ENCODE measurements at regions of chr6 and their contacts with region 1.

Region 1: GRCh38 chr6:124961777-124962611 is at the start of gene RNF217:
- DNase-seq: peak; percentile 49
- H3K4me3 Mint-ChIP-seq: peak within 1 kb of the TSS; percentile 81
- H3K27ac Mint-ChIP-seq: peak within 1 kb of the TSS; percentile 86
- H3K4me1 Mint-ChIP-seq: peaks cover 37% of the 10 kb centered on the region
- H3K27me3 Mint-ChIP-seq: no peaks in the 10 kb centered on the region
- CTCF ChIP-seq: no peak
- total RNA-seq, gene RNF217: 22.8 and 24.8 TPM in 2 replicates

Region 2: GRCh38 chr6:124881898-124882579 is 80.0 kb before region 1 on chr6:
- CTCF ChIA-PET with region 1: interaction called, 3 read pairs
- POLR2A ChIA-PET with region 1: interaction called, 7 read pairs
- intact Hi-C with region 1: loop called (anchors 2 kb)
- DNase-seq: peak; percentile 66
- H3K4me3 Mint-ChIP-seq: peak overlapping the region; percentile 65
- H3K27ac Mint-ChIP-seq: peak overlapping the region; percentile 97
- H3K4me1 Mint-ChIP-seq: peaks cover 25% of the 10 kb centered on the region
- H3K27me3 Mint-ChIP-seq: no peaks in the 10 kb centered on the region
- CTCF ChIP-seq: no peak

Region 3: DNA sequence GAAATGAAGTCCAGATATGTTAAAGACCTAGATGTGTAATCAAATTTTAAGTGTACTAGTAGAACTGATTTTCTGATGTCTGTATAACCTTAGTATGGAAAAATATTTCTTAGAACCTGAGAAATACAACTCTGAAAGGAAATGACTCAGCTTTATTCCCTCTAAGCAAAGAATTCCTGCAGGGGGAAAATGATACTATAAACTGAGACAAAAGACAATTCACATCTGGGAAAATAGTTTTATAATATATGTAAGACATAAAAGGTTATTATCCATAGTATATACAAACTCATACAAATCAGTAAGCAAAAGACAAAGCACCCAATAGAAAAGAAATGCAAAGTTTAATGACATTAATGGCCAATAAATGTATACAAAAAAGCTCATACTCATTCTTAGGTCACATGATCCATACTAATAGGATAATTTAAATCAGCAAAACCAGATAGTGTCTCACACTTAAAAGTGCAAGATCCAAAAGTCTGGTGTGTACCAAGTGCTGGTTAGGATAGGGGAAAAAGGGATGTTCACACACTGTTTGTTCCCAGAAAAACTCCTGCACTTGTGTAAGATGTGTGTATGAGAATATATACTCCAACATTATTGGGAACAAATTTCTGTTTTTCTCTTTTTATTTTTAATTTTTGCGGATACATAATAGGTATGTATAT is 22.8 kb after region 1 on chr6:
- CTCF ChIA-PET with region 1: interaction called, 7 read pairs
- POLR2A ChIA-PET with region 1: interaction called, 11 read pairs
- intact Hi-C with region 1: no loop called
- DNase-seq: peak; percentile 38
- H3K4me3 Mint-ChIP-seq: no peak overlapping the region
- H3K27ac Mint-ChIP-seq: peak overlapping the region; percentile 91
- H3K4me1 Mint-ChIP-seq: peaks cover 45% of the 10 kb centered on the region
- H3K27me3 Mint-ChIP-seq: no peaks in the 10 kb centered on the region
- CTCF ChIP-seq: no peak

Region 4: DNA sequence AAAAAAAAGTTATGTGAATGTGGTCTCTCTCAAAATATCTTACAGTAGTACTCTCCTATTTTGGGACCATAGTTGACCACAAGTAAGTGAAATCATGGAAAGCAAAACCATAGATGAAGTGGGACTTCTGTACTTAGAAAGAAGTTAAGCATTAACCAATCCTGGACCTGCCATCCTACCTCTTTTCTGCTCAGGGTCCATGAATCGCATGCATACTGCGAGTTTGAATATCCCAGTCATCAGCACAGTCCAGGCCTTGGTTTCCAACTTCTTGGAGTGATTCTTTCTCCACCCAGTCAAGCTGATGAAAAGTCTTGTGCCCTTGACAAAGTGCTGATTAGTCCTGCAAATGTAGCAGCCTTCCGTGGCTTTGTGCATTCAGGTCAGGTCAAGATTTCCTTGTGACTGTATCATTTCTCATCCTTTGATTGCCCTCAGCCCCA is 46.3 kb after region 1 on chr6:
- CTCF ChIA-PET with region 1: interaction called, 5 read pairs
- POLR2A ChIA-PET with region 1: interaction called, 20 read pairs
- intact Hi-C with region 1: no loop called
- DNase-seq: no peak
- H3K4me3 Mint-ChIP-seq: no peak overlapping the region
- H3K27ac Mint-ChIP-seq: no peak overlapping the region
- H3K4me1 Mint-ChIP-seq: peaks cover 29% of the 10 kb centered on the region
- H3K27me3 Mint-ChIP-seq: no peaks in the 10 kb centered on the region
- CTCF ChIP-seq: no peak

Region 5: DNA sequence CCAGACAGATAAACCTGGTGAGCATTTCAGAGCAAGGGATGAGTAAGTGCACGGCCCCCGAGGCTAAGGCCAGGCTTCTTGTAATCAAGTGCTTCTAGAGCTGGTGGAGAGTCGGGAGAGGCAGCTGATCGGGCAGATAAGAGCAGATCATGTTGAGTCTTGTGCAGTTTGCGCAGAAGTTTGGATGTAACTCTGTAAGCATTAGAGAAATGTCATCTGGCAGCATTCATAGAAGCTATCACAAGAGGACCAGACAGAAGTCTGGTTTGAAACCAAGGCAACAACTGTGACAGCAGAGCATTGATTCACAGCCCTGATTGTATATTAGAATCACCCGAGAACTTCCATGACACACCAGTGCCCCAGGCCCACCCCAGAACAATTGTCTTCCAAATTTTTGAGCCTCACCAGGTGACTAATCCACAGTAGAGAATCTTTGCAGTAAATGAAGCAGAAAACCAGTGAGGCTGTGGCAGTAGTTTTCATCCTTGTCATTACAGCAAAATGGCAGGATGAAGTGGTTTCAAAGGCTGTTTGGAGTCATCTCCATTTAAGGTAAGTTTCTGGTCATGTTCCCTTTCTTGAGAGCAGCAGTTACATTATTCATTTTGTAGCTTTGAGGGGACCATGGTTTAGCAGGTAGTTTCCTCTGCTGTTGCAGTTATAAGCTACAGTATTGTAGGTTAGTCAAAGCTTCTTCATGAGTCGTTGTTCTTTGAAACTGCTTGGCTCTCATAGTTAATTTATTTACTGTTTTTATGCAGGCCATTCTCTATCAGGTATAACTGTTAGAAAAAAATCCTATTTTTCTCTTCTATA is 84.3 kb after region 1 on chr6:
- CTCF ChIA-PET with region 1: interaction called, 7 read pairs
- POLR2A ChIA-PET with region 1: interaction called, 62 read pairs
- intact Hi-C with region 1: loop called (anchors 2 kb)
- DNase-seq: peak; percentile 89
- H3K4me3 Mint-ChIP-seq: peak overlapping the region; percentile 37
- H3K27ac Mint-ChIP-seq: peak overlapping the region; percentile 78
- H3K4me1 Mint-ChIP-seq: peaks cover 59% of the 10 kb centered on the region
- H3K27me3 Mint-ChIP-seq: no peaks in the 10 kb centered on the region
- CTCF ChIP-seq: no peak

Region 6: GRCh38 chr6:125114248-125114858 is 152.4 kb after region 1 on chr6:
- CTCF ChIA-PET with region 1: interaction called, 49 read pairs
- POLR2A ChIA-PET with region 1: interaction called, 10 read pairs
- intact Hi-C with region 1: loop called (anchors 1 kb)
- DNase-seq: peak; percentile 74
- H3K4me3 Mint-ChIP-seq: no peak overlapping the region
- H3K27ac Mint-ChIP-seq: no peak overlapping the region
- H3K4me1 Mint-ChIP-seq: no peaks in the 10 kb centered on the region
- H3K27me3 Mint-ChIP-seq: no peaks in the 10 kb centered on the region
- CTCF ChIP-seq: peak; percentile 84